ENCODE measurements at regions of chr22 and their contacts with region 1.

Region 1: DNA sequence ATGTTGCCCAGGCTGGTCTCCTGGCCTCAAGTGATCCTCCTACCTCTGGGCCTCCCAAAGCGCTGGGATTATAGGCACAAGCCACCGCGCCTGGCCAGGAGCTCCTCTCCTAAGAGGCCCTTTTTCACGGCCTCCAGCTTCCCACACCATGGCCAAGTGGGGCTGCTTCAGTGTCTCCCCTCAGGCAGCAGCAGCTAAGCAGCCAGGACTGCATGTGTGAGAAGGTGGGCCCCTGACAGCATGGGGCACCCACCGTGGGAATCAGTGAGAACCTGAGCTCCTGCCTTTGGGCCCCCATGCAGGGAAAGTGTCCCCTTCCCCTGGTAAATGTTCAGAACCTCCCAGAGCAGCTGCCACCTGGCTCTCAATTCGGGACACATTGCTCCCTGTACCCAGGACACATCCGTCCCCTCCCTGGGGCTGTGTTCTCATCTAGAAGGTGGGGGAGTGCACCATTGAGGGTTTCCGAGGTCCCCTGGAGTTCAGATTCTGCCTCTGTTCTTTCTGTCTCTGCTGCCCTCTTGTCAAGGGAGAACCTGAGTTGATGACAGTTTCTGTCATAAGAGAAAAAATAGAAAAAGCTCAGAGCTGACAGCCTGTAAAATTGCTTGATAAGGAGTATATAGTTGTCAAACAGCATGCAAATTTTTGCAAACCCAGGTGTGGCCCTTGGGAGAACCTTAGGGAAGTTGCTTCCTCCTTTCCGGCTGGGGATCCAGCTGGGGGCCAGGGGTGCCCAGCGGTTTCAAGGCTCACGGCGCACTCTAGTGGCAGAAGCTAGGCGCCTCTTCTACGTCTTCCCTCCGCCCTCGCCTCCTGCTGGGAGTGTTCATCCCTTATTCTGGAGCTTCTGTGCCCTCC is 29.7 kb downstream of the FAM83F start:
- DNase-seq: peak; percentile 49 to 97 (median 75)

Region 2: DNA sequence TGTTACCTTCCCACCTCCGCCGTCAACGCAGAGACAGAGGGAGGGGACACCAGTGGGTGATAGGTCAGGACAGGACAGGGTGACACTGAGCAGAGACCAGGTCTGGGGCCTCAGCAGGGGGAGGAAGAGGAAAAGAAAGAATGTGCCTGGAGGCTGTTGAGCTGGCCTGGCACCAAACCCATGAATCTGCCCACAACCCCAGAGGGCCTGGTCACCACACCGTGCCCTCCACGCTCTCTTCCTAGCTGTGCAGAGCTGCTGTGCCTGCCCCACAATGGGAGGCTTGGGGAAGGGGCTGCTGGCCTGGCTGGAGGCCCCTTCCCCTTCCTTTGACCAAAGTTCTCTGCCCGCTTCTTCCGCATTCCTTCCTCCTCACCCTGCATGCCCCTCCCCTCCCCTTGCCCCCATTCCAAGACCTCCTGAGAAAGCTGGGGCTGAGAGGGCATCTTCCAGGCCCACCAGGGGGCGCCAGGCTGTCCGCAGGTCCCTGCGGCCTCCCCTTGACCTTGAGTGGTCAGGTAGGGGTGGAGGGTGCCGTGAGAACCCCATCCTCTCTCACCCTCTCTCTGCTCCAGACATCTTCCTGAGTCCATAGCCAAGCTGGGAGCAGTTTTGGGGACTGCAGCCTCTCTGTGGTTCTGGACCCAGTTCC is 464.9 kb before region 1 on chr22:
- intact Hi-C with region 1: loop called (anchors 5 kb)
- DNase-seq: no peak

Region 3: DNA sequence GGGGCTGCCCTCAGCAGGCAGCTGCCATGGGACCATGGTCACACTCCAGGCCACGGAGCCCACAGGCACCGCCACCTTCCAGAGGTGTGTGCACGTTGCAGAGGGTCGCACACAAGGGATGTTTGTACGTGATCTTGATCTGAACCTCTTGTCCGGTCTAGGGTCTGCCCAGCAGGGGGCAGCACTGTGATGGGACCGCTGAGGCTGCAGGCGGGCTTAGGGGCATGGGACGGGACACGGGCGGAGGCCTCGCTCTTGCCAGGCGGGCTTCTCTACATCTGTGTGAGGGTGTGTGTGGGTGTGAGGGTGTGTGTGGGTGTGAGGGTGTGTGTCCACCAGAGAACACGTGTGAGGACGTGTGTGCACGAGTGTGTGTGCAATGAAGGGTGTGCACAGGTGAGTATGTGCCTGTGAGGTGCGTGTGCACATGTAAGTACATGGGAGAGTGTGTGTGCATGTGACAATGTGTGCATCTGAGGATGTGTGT is 401.5 kb before region 1 on chr22:
- intact Hi-C with region 1: loop called (anchors 5 kb)
- DNase-seq: peak in 7 of 10 donors; percentile 37 to 89 (median 55)

Region 4: GRCh38 chr22:39997939-39998338 is 26.5 kb before region 1 on chr22:
- intact Hi-C with region 1: no loop called
- DNase-seq: peak in 2 of 10 donors; percentile 6 to 64